ENCODE measurements at regions of chr1 and their contacts with region 1.

Region 1: GRCh38 chr1:231931846-231932454 is 305.4 kb downstream of the DISC1 start:
- DNase-seq: peak; percentile 46
- H3K4me3 ChIP-seq: no peak overlapping the region
- H3K27ac ChIP-seq: no peak overlapping the region
- H3K4me1 ChIP-seq: no peaks in the 10 kb centered on the region
- H3K27me3 ChIP-seq: no peaks in the 10 kb centered on the region
- CTCF ChIP-seq: peak; percentile 43

Region 2: GRCh38 chr1:230849451-230850224 is 1082.3 kb before region 1 on chr1:
- intact Hi-C with region 1: no loop called
- DNase-seq: no peak
- H3K4me3 ChIP-seq: no peak overlapping the region
- H3K27ac ChIP-seq: peak overlapping the region; percentile 45
- H3K4me1 ChIP-seq: no peaks in the 10 kb centered on the region
- H3K27me3 ChIP-seq: no peaks in the 10 kb centered on the region
- CTCF ChIP-seq: no peak

Region 3: DNA sequence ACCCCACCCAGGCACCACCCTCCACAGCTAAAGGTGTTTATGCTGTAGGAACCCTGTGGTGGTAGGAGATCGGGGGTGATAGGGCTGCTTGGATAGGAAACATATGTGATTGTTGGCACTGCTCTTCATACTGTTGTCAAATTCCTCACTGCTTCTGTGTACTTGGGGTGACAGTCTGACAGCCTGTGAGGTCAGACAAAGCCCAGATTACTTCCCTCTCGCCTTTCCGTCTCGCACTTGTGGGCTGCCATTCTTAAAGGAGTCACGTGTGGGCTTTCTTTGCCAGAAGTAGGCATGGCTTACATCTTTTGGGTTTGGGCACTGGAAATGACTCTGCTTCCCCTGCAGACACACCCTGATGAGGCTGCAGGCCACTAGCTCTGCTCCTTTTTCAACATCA is 58.4 kb after region 1 on chr1:
- intact Hi-C with region 1: no loop called
- DNase-seq: no peak
- H3K4me3 ChIP-seq: no peak overlapping the region
- H3K27ac ChIP-seq: no peak overlapping the region
- H3K4me1 ChIP-seq: no peaks in the 10 kb centered on the region
- H3K27me3 ChIP-seq: no peaks in the 10 kb centered on the region
- CTCF ChIP-seq: no peak

Region 4: DNA sequence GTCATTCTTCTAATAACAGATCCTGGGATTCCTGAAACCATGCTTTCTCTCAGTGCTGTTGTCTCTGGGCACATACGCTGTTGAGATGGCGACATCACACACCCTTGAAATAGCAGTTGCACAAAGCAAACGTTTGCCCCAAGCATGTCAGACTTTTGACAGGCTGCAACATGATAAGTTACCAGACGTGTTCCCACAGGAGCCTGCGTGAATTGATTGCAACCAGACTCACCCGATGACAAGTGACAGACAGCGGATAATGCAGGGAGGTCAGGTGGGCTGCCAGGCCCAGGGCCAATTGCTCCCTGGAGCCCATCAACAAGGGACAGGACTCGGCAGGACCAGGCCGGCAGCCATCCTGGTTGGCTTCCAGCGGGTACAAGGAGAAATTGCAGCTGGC is 387.1 kb after region 1 on chr1:
- intact Hi-C with region 1: loop called (anchors 10 kb)
- DNase-seq: no peak
- H3K4me3 ChIP-seq: no peak overlapping the region
- H3K27ac ChIP-seq: peak overlapping the region; percentile 35
- H3K4me1 ChIP-seq: peaks cover 6% of the 10 kb centered on the region
- H3K27me3 ChIP-seq: no peaks in the 10 kb centered on the region
- CTCF ChIP-seq: no peak